ENCODE measurements at regions of chr1 and their contacts with region 1.

Region 1: GRCh38 chr1:151494741-151495281 is 16.4 kb upstream of the CGN start:
- DNase-seq: peak; percentile 64 to 92
- H3K4me3 ChIP-seq: no peak overlapping the region
- H3K27ac ChIP-seq: peak overlapping the region; percentile 73
- H3K4me1 ChIP-seq: peaks cover 25% of the 10 kb centered on the region
- H3K27me3 ChIP-seq: no peaks in the 10 kb centered on the region
- CTCF ChIP-seq: no peak

Region 2: GRCh38 chr1:151539990-151540981 is 45.5 kb after region 1 on chr1 and contains the start of gene TUFT1:
- CTCF ChIA-PET with region 1: interaction called, 5 read pairs
- POLR2A ChIA-PET with region 1: interaction called, 31 read pairs
- intact Hi-C with region 1: no loop called
- DNase-seq: peak; percentile 85 to 95
- H3K4me3 ChIP-seq: peak within 1 kb of the TSS; percentile 92
- H3K27ac ChIP-seq: peak within 1 kb of the TSS; percentile 95
- H3K4me1 ChIP-seq: peaks cover 60% of the 10 kb centered on the region
- H3K27me3 ChIP-seq: no peaks in the 10 kb centered on the region
- CTCF ChIP-seq: no peak
- total RNA-seq, gene TUFT1: 35.3 and 40.2 TPM in 2 replicates

Measured in PC-9 (cell line).